GM23248 (cell line): ENCODE measurements at regions of chr2 and their contacts with region 1.

Region 1: GRCh38 chr2:222982010-222982908 is 69.7 kb upstream of the KCNE4 start:
- DNase-seq: peak; percentile 92
- H3K4me3 ChIP-seq: no peak overlapping the region
- H3K27ac ChIP-seq: peak overlapping the region; percentile 22; the same call in 1 of the 2 replicates
- H3K4me1 ChIP-seq: peaks cover 9% of the 10 kb centered on the region
- H3K27me3 ChIP-seq: no peaks in the 10 kb centered on the region

Region 2: GRCh38 chr2:221857719-221858118 is 1124.5 kb before region 1 on chr2:
- in situ Hi-C with region 1: no loop called
- DNase-seq: no peak
- H3K4me3 ChIP-seq: no peak overlapping the region
- H3K27ac ChIP-seq: no peak overlapping the region
- H3K4me1 ChIP-seq: no peaks in the 10 kb centered on the region
- H3K27me3 ChIP-seq: peaks cover 7% of the 10 kb centered on the region

Region 3: DNA sequence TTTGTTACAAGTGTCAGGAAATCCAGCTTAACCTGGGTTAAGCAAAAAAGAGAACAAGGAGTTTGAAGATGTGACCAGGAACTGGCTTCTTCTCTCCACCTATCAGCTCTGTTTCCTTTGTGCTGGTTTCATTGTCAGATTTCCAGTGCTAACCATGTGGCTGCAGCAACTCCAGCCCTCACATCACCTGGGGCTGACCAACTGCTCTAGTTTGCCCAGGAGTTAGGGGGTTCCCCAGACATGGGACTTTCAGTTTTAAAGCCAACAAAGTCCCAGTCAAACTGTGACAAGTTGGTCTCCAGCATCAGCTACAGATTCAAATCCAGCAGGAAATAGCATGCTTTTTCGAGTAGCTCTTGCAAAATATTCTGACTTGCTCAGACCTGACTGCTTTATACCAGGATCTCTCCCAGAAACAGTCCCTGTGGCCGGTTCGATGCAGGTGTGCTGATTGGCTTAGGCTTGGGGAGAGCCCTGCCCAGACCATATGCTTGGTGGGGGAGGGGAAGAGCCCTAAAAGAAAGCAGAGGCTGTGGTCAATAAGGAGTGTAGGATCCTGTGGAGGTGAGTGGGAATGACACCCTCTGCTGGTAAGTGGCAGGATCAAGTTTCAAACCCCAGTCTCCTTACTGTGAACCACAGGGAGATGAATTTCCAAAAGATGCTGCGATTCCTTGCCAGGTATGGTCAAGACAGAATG is 119.2 kb after region 1 on chr2:
- in situ Hi-C with region 1: loop called (anchors 10 kb)
- DNase-seq: peak; percentile 57
- H3K4me3 ChIP-seq: no peak overlapping the region
- H3K27ac ChIP-seq: no peak overlapping the region
- H3K4me1 ChIP-seq: peaks cover 13% of the 10 kb centered on the region
- H3K27me3 ChIP-seq: no peaks in the 10 kb centered on the region

Region 4: DNA sequence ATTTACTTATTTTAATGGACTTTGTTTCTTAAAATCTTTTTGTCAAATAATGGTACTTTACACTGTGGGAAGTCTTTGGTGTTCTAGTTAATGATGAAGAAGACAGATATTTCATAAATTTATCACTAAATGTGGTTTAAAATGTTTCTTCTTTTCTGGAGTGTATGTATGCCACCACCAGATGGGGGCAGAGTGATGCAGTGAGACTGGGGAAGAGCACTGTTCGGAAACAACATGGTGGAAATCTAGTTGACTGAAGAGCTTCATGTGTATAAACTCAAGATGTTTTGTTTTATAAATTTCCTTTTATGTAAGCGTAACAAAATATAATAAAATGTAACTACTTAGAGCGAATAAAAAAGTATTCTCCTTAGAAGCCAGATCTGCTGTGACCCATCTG is 264.9 kb after region 1 on chr2:
- in situ Hi-C with region 1: loop called (anchors 25 kb)
- DNase-seq: peak; percentile 64
- H3K4me3 ChIP-seq: no peak overlapping the region
- H3K27ac ChIP-seq: no peak overlapping the region
- H3K4me1 ChIP-seq: no peaks in the 10 kb centered on the region
- H3K27me3 ChIP-seq: no peaks in the 10 kb centered on the region